ENCODE measurements at regions of chr3 and their contacts with region 1.

Region 1: DNA sequence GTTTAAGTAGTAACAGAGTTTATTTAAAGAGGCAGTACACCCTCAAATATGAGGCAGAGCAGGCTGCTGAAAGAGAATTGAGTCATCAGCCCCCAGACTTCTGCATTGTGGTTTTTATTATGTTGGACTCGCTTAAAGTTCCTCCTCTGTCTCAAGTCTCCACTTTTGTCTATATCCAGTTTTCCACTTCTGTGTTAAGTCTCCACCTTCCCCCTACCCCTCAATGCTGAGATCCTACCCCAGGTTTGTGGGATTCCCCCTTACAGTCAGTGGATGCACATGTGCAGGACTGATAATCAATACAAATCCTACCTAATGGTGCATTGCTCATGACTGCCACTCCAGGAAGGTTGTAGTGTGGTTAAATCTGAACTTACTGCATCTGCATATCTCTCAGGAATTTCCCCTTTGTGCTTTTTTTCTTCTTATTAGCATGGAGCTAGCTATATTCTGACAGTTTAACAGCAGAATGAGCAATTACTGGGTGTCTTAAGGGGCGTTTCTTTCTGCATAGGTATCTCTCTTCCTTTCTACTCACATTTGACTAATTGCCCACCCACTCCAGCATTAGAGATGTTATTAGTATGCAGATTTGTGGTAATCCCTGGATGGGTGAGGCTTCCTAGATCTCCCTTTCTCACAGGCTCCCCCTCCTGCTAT is 11.9 kb upstream of the CD200R1L start:
- H3K4me3 Mint-ChIP-seq: peak overlapping the region; percentile 54
- H3K27ac Mint-ChIP-seq: peak overlapping the region; percentile 92
- H3K4me1 Mint-ChIP-seq: peaks cover 42% of the 10 kb centered on the region
- H3K27me3 Mint-ChIP-seq: no peaks in the 10 kb centered on the region

Region 2: DNA sequence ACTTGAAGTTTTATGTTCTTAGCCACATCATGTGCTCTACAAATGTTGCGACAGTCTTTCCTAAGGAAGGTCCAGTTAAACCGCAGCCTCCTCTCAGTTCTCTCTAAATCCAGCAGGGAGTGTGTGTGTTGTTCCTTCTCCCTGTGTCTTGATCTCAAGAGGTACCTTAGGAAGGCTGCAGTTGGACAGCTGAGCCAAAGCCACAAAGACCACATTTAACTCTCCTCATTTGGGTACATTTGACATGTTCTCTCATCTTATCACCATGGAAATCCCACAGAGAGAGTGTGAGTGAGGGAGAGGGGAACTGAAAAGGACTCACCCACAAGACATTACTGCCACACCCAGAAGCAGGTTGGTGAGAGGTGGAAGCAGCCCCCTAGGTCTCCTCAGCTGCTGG is 91.4 kb before region 1 on chr3:
- intact Hi-C with region 1: loop called (anchors 5 kb)
- H3K4me3 Mint-ChIP-seq: no peak overlapping the region
- H3K27ac Mint-ChIP-seq: peak overlapping the region; percentile 92
- H3K4me1 Mint-ChIP-seq: peaks cover 75% of the 10 kb centered on the region
- H3K27me3 Mint-ChIP-seq: no peaks in the 10 kb centered on the region

Region 3: GRCh38 chr3:113136071-113136470 is 277.5 kb after region 1 on chr3:
- intact Hi-C with region 1: no loop called
- H3K4me3 Mint-ChIP-seq: no peak overlapping the region
- H3K27ac Mint-ChIP-seq: no peak overlapping the region
- H3K4me1 Mint-ChIP-seq: peaks cover 12% of the 10 kb centered on the region
- H3K27me3 Mint-ChIP-seq: no peaks in the 10 kb centered on the region